ENCODE measurements at regions of chr7 and their contacts with region 1.

Region 1: DNA sequence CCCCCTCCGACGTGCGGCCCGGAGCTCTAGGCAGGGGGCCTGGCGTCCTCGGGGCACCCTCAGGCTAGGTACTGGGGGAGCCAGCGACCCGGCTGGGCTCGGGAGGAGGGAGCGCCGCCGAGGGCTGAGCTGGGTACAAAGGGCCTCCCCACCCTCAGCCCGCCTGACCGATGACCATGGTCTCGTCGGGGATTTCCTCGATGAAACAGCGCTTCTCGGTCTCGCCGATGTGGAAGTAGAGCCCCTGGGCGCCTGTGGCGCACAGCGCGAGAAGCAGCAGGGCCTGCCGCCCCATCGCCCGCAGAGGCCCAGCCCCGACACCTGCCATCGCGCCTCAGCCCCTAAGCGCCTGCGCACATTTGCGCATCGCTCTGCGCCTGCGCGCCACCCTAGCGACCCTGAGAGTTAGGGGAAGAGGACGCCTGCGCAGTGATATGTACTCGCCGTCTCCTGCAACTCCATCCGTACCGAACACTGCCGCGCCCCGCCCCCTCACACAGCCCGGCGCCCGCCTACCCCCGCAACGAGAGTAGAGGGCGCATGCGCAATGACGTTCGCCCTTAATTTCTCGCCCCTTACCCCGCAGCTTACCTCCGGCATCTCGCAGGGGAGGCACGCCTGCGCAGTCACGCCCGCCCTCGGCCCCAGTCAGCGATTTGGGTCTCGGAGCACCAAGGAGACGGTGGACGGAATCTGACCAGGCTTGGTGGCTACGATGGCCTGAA is at the start of gene TMED4:
- DNase-seq: peak; percentile 98 to 99 (median 98)
- H3K4me3 ChIP-seq: peak within 1 kb of the TSS; percentile 65 to 100 (median 98)
- H3K27ac ChIP-seq: peak within 1 kb of the TSS; percentile 87 to 100 (median 98)
- H3K27me3 ChIP-seq: no peaks in the 10 kb centered on the region
- CTCF ChIP-seq: peak in 23 of 56 donors; percentile 3 to 51 (median 19)
- total RNA-seq, gene TMED4: 53.4 to 91.7 (median 69.9) TPM

Region 2: GRCh38 chr7:44145969-44146911 is 435.8 kb before region 1 on chr7:
- intact Hi-C with region 1: no loop called
- DNase-seq: peak; percentile 49 to 86 (median 63)
- H3K4me3 ChIP-seq: peak overlapping the region; percentile 35 to 80 (median 65)
- H3K27ac ChIP-seq: peak overlapping the region in 50 of 59 donors; percentile 3 to 84 (median 64)
- H3K27me3 ChIP-seq: peaks cover 0 to 5% (median 0%) of the 10 kb centered on the region in 45 donors
- CTCF ChIP-seq: no peak

Region 3: DNA sequence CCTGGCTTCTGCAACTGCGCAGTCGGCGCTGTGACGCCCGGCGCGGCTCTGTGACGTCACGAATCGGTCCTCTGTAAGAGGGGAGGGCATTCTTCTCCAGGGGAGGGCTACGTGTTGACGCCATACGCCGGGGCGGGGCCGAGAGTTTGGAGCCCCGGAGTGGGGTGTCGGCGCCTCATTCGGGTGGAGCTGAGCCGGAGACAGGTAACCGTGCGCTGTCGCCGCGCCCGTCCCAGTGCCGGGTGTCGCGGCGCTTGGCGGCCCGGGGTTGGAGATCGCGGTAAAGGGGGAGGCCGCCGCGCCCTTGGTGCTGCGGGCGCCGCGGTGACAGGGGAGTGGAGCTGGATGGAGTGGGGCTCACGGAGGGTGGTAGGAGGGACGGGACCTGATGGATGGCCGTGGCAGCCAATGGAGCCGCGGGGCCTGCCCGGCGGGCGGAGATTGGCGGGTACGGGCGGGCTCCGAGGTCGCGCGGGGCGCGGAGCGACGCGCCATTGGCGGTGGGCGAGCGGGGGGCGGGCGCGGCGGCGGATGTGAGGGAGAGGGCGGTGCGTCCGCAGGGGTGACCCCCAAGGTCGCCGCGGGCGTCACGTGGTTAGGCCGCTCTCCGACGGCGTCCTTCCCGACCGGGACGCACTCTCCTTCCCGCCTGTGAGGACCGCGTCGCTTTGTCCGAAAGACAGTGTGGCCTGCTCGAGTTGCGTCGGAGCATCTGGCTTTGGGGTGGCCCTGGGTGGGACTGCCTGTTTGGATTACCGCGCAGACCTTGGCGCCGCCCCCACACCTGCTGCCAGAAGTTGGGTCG is 24.6 kb after region 1 on chr7 and contains the start of gene OGDH:
- intact Hi-C with region 1: loop called in 1 of 2 experiments (anchors 1 kb)
- DNase-seq: peak; percentile 98 to 100 (median 99)
- H3K4me3 ChIP-seq: peak within 1 kb of the TSS; percentile 60 to 99 (median 88)
- H3K27ac ChIP-seq: peak within 1 kb of the TSS; percentile 88 to 100 (median 98)
- H3K27me3 ChIP-seq: no peaks in the 10 kb centered on the region
- CTCF ChIP-seq: peak in 11 of 56 donors; percentile 1 to 33 (median 12)
- total RNA-seq, gene OGDH: 86.3 to 153 (median 120) TPM

Region 4: GRCh38 chr7:44617225-44617890 is 35.3 kb after region 1 on chr7:
- intact Hi-C with region 1: no loop called
- DNase-seq: no peak
- H3K4me3 ChIP-seq: no peak overlapping the region
- H3K27ac ChIP-seq: peak overlapping the region in 1 of 59 donors; percentile 36
- H3K27me3 ChIP-seq: no peaks in the 10 kb centered on the region
- CTCF ChIP-seq: no peak

Region 5: GRCh38 chr7:44797329-44798251 is 215.5 kb after region 1 on chr7:
- intact Hi-C with region 1: loop called (anchors 2 to 5 kb)
- DNase-seq: peak; percentile 79 to 94 (median 90)
- H3K4me3 ChIP-seq: peak overlapping the region; percentile 61 to 99 (median 92)
- H3K27ac ChIP-seq: peak overlapping the region; percentile 85 to 100 (median 97)
- H3K27me3 ChIP-seq: no peaks in the 10 kb centered on the region
- CTCF ChIP-seq: peak in 55 of 56 donors; percentile 38 to 79 (median 60)

Region 6: GRCh38 chr7:44858161-44858560 is 276.1 kb after region 1 on chr7:
- intact Hi-C with region 1: no loop called
- DNase-seq: no peak
- H3K4me3 ChIP-seq: no peak overlapping the region
- H3K27ac ChIP-seq: no peak overlapping the region
- H3K27me3 ChIP-seq: no peaks in the 10 kb centered on the region
- CTCF ChIP-seq: peak in 37 of 56 donors; percentile 10 to 56 (median 32)

Region 7: GRCh38 chr7:44885394-44886317 is 303.6 kb after region 1 on chr7 and contains the start of gene PURB:
- intact Hi-C with region 1: loop called in 1 of 2 experiments (anchors 10 kb)
- DNase-seq: peak; percentile 88 to 97 (median 94)
- H3K4me3 ChIP-seq: peak within 1 kb of the TSS; percentile 70 to 100 (median 94)
- H3K27ac ChIP-seq: peak within 1 kb of the TSS; percentile 82 to 99 (median 97)
- H3K27me3 ChIP-seq: no peaks in the 10 kb centered on the region
- CTCF ChIP-seq: peak in 11 of 56 donors; percentile 6 to 33 (median 22)
- total RNA-seq, gene PURB: 28.0 to 55.6 (median 40.5) TPM

Region 8: DNA sequence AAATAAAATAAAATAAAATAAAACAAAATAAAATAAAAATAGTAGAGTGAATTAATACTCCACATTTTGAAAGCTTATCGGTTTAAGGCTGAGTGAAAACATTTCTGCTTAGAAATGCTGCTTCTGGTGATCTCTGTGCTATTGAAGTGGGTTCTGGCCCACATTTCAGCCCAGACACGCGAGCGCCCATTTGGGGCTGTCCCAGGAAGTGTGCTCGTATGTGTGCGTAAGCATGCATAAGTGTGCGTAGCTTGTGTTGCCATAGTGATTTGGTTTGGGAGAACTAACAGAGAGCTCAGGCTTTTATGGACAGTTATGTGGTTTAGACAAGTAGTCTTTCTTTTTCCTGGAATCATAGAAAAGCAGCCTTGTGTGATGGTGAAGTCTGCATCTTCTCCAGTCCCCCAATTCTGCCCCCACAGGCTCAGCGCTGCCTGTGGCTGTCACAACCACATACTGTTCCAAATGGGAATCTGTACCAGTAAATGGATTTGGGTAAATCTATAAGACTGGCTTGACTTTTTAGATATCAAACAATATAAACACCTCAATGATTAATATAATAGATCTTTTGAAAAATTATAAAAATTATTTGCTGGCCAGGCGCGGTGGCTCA is 333.1 kb after region 1 on chr7:
- intact Hi-C with region 1: loop called in 1 of 2 experiments (anchors 10 kb)
- DNase-seq: peak in 1 of 10 donors; percentile 14
- H3K4me3 ChIP-seq: peak overlapping the region in 8 of 59 donors; percentile 5 to 46 (median 23)
- H3K27ac ChIP-seq: peak overlapping the region in 36 of 59 donors; percentile 5 to 79 (median 64)
- H3K27me3 ChIP-seq: no peaks in the 10 kb centered on the region
- CTCF ChIP-seq: no peak

Region 9: GRCh38 chr7:44999245-45000095 is 417.4 kb after region 1 on chr7:
- intact Hi-C with region 1: loop called in 1 of 2 experiments (anchors 5 kb)
- DNase-seq: peak; percentile 95 to 100 (median 99)
- H3K4me3 ChIP-seq: peak overlapping the region; percentile 48 to 92 (median 75)
- H3K27ac ChIP-seq: peak overlapping the region; percentile 41 to 94 (median 85)
- H3K27me3 ChIP-seq: no peaks in the 10 kb centered on the region
- CTCF ChIP-seq: peak in 37 of 56 donors; percentile 4 to 57 (median 30)

Measured in dorsolateral prefrontal cortex (tissue), 120 donors.